ENCODE measurements at regions of chr5 and their contacts with region 1.

Region 1: DNA sequence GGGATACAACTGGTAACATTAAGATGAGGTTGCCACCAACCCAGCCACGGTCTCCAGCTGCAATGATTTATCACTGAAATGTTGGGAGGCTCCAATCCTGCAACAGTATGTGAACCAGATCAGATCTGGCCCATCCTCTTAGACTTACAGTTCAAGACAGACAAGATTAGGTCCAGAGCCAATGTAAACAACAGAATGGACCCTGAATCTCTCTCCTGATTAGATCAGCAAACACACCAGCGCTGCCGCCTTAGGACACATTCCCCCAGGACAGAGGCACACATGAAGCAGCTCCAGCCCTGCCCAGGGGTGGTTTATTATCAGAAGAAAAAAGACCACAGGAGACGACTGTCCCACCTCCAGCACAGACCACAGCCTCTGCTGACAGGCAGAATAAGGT is 82.1 kb downstream of the SLIT3 start:
- DNase-seq: no peak
- H3K4me3 ChIP-seq: no peak overlapping the region
- CTCF ChIP-seq: no peak

Region 2: GRCh38 chr5:169173372-169173771 is 45.5 kb before region 1 on chr5:
- in situ Hi-C with region 1: loop called (anchors 5 kb)
- DNase-seq: no peak
- H3K4me3 ChIP-seq: no peak overlapping the region
- CTCF ChIP-seq: no peak

Region 3: GRCh38 chr5:169265888-169266287 is 47.0 kb after region 1 on chr5:
- in situ Hi-C with region 1: no loop called
- DNase-seq: no peak
- H3K4me3 ChIP-seq: no peak overlapping the region
- CTCF ChIP-seq: peak; percentile 33

Region 4: GRCh38 chr5:169300468-169301385 is 81.9 kb after region 1 on chr5 and contains the start of gene SLIT3:
- in situ Hi-C with region 1: no loop called
- DNase-seq: peak; percentile 52
- H3K4me3 ChIP-seq: peak within 1 kb of the TSS; percentile 47
- CTCF ChIP-seq: no peak